ENCODE measurements at regions of chr6 and their contacts with region 1.

Region 1: DNA sequence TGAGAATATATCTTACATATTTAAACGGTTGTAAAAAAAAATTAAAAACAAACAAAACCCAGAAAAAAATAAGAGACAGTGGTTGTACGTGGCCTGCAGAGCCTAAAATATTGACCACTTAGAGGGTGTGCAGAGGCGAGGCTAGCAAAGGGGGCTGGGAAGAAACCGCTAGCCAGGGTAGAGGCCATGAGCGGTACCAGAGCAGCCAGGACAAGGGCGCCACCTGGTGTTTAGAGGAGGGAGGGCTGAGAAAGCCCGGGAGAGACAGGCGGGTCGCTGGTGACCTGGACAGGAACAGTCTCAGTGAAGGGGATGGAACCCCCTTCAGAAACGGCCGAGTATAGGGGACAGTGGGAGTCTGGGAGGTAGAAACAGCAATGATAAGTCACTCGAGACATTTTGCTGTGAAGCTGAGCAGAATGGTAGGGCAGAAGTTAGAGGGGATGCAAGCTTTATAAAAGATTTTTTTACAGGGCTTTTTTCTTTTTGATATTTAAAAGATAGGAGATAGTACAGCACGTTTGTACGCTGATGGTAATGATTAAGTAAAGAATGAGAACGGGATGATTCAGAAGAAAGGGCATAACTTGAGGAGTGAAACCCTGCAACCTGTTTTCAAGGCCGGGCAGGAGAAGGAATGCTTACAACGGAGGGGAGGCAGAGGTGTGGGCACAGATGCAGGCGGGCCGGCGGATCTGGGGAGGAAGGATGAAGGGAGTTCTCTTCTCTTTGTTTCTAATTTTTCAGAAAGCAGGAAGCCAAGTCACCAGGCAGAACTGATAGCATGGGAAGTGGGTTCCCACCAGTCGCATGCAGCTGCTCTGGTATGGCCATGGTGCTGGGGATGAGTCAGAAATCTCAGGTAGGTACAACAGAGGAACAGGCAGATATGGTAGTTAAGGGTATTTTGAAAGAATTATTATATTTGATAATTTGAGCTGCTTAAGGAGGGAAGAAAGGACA is 76.2 kb downstream of the FAM229B start:
- DNase-seq: peak; percentile 77
- H3K4me3 Mint-ChIP-seq: peak overlapping the region; percentile 46
- H3K27ac Mint-ChIP-seq: peak overlapping the region; percentile 28
- H3K4me1 Mint-ChIP-seq: peaks cover 18% of the 10 kb centered on the region
- H3K27me3 Mint-ChIP-seq: peaks cover 59% of the 10 kb centered on the region

Region 2: DNA sequence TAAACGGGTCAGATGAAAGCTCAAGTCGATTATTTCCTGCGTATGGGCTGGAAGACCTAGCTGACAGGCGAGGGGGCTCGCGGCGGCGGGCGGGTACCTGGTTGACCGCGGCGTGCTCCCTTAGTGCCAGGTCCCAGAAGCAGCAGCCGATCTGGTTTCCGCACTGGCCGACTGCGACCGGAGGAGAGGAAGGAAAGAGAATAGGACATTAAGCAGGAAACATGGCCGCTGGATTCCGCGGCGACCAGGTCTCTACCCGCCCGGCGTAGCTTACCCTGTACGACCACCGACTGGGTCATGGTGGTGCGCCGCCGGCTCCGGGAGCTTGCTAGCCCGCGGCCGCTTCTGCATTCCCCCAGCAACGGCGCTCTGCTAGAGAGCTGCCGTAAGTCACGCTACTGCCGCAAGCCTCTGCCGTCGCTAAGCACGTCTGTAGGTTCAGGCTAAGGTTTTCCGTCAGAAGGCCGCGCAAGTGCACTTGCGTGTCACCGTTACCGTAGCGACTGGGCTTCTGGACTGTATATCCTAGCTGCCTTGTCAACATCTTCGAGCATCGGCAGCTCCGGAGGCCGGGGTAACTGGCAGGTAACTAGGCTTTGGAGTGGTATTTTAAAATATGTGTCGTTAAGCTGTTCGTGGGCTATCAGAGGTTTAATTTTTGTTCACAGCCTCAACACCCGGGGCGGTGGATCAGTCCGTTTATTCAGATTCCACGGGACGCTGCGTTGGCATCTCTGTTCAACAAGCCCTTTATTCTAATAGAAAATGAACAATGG is 76.3 kb before region 1 on chr6 and contains the starts of genes FAM229B and TUBE1:
- CTCF ChIA-PET with region 1: interaction called, 29 read pairs
- POLR2A ChIA-PET with region 1: interaction called, 14 read pairs
- DNase-seq: peak; percentile 92
- H3K4me3 Mint-ChIP-seq: no peak within 1 kb of the TSS
- H3K27ac Mint-ChIP-seq: no peak within 1 kb of the TSS
- H3K4me1 Mint-ChIP-seq: peaks cover 8% of the 10 kb centered on the region
- H3K27me3 Mint-ChIP-seq: peaks cover 33% of the 10 kb centered on the region
- total RNA-seq, gene FAM229B: 2.7 to 3.4 TPM
- total RNA-seq, gene TUBE1: 23.8 to 28.5 TPM

Region 3: GRCh38 chr6:112144145-112144926 is 19.2 kb before region 1 on chr6:
- CTCF ChIA-PET with region 1: interaction called, 15 read pairs
- POLR2A ChIA-PET with region 1: no interaction called
- DNase-seq: no peak
- H3K4me3 Mint-ChIP-seq: no peak overlapping the region
- H3K27ac Mint-ChIP-seq: no peak overlapping the region
- H3K4me1 Mint-ChIP-seq: peaks cover 1% of the 10 kb centered on the region
- H3K27me3 Mint-ChIP-seq: peaks cover 14% of the 10 kb centered on the region

Measured in activated CD4-positive, alpha-beta memory T cell treated with anti-CD3 and anti-CD28 coated beads, Interleukin-2, amount 10 ng/mL, durations not matched to agents 7 days and 5 days (primary cell).